Activated B cell treated with CpG ODN at 0.5 μM for 24 hours (primary cell): ENCODE measurements at regions of chr5 and their contacts with region 1.

Region 1: DNA sequence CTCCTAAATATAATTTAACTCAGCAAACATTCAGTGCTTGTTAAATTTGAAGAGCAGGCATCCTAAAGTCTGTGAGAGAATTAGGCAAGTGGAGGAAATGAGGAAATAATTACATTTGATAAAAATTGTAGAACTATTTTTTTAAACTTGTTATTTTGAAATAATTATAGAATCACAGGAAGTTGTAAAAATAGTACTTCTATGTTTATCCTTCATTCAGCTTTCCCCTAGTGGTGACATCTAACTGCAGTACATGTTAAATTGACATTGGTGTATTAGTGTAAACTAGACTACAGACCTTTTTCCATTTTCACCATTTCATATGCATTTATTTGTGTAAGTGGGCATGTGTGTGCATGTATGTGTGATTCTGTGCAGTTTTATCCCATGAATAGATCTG is 51.6 kb downstream of the F2RL2 start:
- DNase-seq: no peak
- ATAC-seq: no peak
- H3K4me3 Mint-ChIP-seq: no peak overlapping the region
- H3K27ac Mint-ChIP-seq: no peak overlapping the region
- H3K4me1 Mint-ChIP-seq: peaks cover 17% of the 10 kb centered on the region
- H3K27me3 Mint-ChIP-seq: no peaks in the 10 kb centered on the region
- CTCF ChIP-seq: no peak

Region 2: DNA sequence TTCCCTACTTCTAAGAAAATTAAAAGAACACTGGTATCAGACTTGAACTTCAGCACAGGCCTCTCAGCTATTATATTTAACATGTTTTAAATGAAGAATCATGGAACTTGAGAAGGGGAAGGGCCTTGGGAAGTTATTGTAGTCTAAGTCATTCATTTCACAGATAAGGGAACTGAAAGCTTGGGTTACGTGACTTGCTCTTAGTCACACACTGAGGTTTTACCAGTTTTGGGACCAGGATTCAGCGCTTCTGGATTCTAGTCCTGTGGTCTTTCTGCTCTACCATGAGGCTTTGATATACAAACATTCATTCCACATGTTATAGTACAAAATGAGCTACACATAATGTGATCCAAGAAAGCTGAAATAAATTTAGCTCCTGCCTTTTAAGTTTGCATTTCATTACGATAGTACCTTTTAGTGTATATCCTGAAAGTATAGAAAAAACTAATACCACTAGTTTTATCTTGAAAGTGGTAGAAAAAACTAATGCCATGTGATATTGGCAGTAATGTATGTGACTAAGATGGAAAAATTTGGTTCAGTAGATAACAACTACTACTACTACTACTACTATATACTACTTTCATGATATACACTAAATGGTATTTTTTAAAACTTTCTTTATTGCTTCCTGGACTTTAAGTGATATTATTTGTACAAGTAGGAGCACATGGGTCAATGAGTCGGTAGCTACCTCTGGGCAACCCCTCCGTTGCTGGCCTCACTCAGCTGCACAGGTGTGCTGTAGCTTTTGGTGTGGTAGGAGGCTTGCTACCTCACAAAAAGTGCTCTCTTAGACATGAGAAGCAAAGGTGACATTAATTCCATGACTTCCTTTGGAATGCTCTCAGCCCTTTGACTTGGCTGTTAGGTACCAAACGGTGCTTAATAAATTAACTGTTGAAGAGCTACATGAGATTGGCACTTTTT is 10.9 kb after region 1 on chr5:
- CTCF ChIA-PET with region 1: no interaction called
- POLR2A ChIA-PET with region 1: no interaction called
- intact Hi-C with region 1: loop called (anchors 1 kb)
- DNase-seq: no peak
- ATAC-seq: peak; percentile 74
- H3K4me3 Mint-ChIP-seq: no peak overlapping the region
- H3K27ac Mint-ChIP-seq: no peak overlapping the region
- H3K4me1 Mint-ChIP-seq: peaks cover 17% of the 10 kb centered on the region
- H3K27me3 Mint-ChIP-seq: no peaks in the 10 kb centered on the region
- CTCF ChIP-seq: no peak